Psoas muscle (tissue), 8 donors: ENCODE measurements at regions of chr11 and their contacts with region 1.

Region 1: DNA sequence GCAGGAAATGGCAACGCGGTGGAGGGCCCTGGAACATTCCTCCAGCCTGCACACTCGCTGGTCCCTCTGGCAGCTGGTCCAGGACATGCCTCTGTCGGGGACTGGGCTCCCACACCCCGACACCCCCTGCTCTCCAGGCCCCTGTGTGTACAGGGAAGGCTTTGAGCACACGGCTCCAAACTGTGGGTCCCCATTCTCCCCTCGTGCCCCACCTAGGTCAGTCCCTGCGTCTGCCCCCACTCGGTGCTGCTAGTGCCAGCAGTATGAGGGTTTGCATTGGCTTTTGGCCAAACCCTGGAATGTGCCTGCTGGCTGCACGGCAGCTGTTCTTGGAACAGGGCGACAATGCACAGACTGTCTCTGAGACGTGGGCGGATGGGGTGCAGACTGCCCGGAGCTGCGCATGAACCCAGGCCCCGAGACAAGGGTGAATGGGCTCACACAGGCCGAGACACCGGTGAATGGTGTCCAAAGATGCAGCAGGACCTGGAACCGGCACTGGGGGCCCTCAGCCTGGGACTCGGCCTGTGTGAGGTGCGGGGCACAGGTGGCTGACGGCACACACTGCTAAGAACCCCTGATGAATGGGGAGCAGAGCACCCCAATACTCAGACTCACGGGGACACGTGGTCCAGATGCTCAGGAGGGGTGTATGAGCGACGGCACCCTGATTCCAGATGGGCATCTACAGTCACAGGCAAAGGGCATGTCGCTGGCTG is 7.5 kb upstream of the SYT8 start:
- DNase-seq: peak; percentile 28 to 56
- ATAC-seq: peak; percentile 39 to 69 (median 50)
- H3K4me3 ChIP-seq: no peak overlapping the region
- H3K27ac ChIP-seq: peak overlapping the region; percentile 23
- H3K4me1 ChIP-seq: no peaks in the 10 kb centered on the region
- H3K27me3 ChIP-seq: peaks cover 0 to 6% (median 5%) of the 10 kb centered on the region in 3 donors
- CTCF ChIP-seq: no peak

Region 2: DNA sequence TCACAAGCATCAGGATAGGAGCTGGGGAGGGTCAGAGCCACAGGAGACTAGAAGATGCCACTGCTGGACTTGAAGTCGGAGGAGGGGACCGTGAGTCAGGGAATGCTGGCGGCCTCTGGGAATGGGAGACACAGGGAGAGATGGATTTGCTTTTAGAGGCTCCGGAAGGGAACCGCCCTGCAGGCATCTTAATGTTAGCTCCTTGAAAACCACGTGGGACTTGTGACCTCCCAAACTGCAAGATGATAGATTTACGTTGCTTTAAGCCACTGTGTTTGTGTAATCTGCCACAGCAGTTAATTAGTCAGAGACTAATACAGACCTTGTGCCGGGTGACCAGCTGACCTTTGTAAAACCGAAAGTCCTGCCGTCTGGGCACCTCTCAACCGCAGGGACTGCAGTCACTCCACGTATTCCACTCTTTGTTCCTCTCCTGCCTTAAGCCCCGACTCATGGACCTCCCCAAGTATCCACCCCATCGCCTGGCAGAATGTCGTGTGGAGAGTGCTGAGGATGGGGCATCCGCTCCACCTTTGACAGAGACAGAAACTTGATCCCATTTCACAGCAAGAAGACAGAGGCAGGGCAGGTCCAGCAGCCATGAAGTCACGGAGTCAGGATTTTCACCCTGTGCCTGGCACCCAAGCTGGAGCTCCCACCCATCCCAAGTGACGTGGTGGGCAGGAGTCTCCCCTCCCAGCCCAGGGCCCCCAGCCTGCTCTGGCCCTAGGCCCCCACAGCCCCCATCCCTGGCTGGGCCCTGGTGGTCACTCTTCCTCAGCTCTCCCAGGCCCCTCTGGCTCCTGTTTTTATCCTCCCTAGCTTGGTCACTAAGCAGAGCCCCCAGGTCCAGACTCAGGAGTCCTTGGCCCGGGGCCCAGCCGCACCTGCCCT is 44.2 kb before region 1 on chr11:
- intact Hi-C with region 1: loop called in 1 of 2 experiments (anchors 5 kb)
- DNase-seq: no peak
- ATAC-seq: no peak
- H3K4me3 ChIP-seq: no peak overlapping the region
- H3K27ac ChIP-seq: no peak overlapping the region
- H3K4me1 ChIP-seq: no peaks in the 10 kb centered on the region
- H3K27me3 ChIP-seq: peaks cover 0 to 9% (median 0%) of the 10 kb centered on the region in 3 donors
- CTCF ChIP-seq: no peak